Panc1 (cell line): ENCODE measurements at regions of chr13 and their contacts with region 1.

Region 1: DNA sequence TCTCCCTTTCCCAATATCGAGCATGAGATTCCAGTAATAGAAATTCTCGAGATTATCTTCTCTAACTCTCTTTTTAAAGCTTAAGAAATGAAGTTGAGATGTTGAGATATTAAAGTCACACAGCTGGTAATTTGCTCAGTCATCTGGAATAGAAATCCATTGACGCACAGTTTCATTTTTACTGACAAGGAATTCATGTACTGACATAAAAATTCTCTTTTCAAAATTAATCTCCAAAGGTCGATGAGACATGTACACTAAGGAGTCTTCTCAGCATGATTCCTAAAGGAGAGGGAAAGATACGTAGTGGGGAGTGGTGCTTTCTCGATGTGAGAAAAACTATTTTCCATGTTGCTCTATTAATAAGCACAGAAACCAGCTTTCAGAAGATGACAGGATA is 1639.5 kb upstream of the MIR17HG start:
- DNase-seq: no peak
- ATAC-seq: no peak
- H3K4me3 ChIP-seq: no peak overlapping the region
- H3K27ac ChIP-seq: no peak overlapping the region
- H3K4me1 ChIP-seq: no peaks in the 10 kb centered on the region
- H3K27me3 ChIP-seq: no peaks in the 10 kb centered on the region
- CTCF ChIP-seq: no peak

Region 2: GRCh38 chr13:89343165-89343564 is 364.8 kb before region 1 on chr13:
- CTCF ChIA-PET with region 1: no interaction called
- POLR2A ChIA-PET with region 1: no interaction called
- in situ Hi-C with region 1: no loop called
- intact Hi-C with region 1: no loop called
- DNase-seq: no peak
- ATAC-seq: no peak
- H3K4me3 ChIP-seq: no peak overlapping the region
- H3K27ac ChIP-seq: no peak overlapping the region
- H3K4me1 ChIP-seq: no peaks in the 10 kb centered on the region
- H3K27me3 ChIP-seq: no peaks in the 10 kb centered on the region
- CTCF ChIP-seq: no peak

Region 3: GRCh38 chr13:90974249-90974975 is 1266.4 kb after region 1 on chr13:
- CTCF ChIA-PET with region 1: no interaction called
- POLR2A ChIA-PET with region 1: interaction called, 14 read pairs
- in situ Hi-C with region 1: no loop called
- intact Hi-C with region 1: no loop called
- DNase-seq: no peak
- ATAC-seq: no peak
- H3K4me3 ChIP-seq: no peak overlapping the region
- H3K27ac ChIP-seq: no peak overlapping the region
- H3K4me1 ChIP-seq: no peaks in the 10 kb centered on the region
- H3K27me3 ChIP-seq: no peaks in the 10 kb centered on the region
- CTCF ChIP-seq: no peak